ENCODE measurements at regions of chr2 and their contacts with region 1.

Region 1: GRCh38 chr2:58046585-58047372 is at the start of gene VRK2:
- DNase-seq: peak; percentile 93
- ATAC-seq: peak; percentile 97 to 99
- total RNA-seq, gene VRK2: 20.5 to 24.2 TPM

Region 2: GRCh38 chr2:58098254-58099095 is 51.7 kb after region 1 on chr2:
- intact Hi-C with region 1: no loop called
- DNase-seq: no peak
- ATAC-seq: no peak

Region 3: GRCh38 chr2:58240670-58241545 is 194.1 kb after region 1 on chr2 and contains the start of gene FANCL:
- intact Hi-C with region 1: loop called in 1 of 2 experiments (anchors 10 kb)
- DNase-seq: peak; percentile 93
- ATAC-seq: peak; percentile 98 to 99
- total RNA-seq, gene FANCL: 12.9 to 13.7 TPM